Heart right ventricle (tissue), 16 donors: ENCODE measurements at regions of chr13 and their contacts with region 1.

Region 1: DNA sequence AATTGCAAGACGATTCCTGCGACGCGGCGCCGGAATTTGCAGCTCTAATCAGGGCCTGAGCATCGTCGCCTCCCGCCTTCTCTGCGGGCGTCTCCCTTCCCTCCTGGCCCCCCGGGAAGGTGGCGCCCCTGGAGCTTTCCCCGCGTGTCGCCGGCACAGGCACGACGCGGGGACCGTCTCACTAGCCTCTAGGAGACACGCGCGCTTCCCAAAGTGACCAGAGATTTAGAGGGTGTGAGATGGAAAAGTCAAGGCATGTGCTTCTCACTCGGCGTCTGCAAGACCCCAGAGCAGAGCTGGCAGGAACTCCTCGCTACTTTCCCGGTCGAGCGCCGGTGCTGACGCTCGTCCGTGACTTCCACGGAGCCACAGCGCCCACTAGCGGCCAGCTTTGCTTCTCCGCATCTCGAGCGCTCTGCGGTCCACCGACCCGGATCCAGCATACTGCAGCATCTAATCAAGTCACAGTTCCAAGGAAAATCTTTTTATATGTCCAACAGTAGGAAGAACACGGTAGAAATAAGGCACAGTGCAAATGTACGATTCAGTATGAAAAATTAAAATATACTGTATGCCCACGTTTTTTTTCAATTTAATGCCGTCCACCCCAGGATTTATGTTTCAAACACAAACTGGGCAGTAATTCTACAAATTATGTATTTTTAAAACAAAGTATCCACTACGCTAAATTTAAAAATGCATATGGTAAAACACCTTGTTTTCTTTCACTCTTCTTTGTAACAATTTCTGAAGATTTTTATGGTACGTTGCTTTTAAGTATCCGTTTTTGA is 977 bp upstream of the EFNB2 start:
- DNase-seq: peak; percentile 92 to 94
- ATAC-seq: peak; percentile 66 to 92 (median 86)
- H3K4me3 ChIP-seq: peak overlapping the region; percentile 59 to 87 (median 73)
- H3K27ac ChIP-seq: peak overlapping the region; percentile 47 to 88 (median 82)
- H3K4me1 ChIP-seq: peaks cover 0 to 47% (median 21%) of the 10 kb centered on the region in 9 donors
- H3K27me3 ChIP-seq: peaks cover 0 to 39% (median 0%) of the 10 kb centered on the region in 7 donors
- CTCF ChIP-seq: peak; percentile 93 to 99 (median 98)

Region 2: DNA sequence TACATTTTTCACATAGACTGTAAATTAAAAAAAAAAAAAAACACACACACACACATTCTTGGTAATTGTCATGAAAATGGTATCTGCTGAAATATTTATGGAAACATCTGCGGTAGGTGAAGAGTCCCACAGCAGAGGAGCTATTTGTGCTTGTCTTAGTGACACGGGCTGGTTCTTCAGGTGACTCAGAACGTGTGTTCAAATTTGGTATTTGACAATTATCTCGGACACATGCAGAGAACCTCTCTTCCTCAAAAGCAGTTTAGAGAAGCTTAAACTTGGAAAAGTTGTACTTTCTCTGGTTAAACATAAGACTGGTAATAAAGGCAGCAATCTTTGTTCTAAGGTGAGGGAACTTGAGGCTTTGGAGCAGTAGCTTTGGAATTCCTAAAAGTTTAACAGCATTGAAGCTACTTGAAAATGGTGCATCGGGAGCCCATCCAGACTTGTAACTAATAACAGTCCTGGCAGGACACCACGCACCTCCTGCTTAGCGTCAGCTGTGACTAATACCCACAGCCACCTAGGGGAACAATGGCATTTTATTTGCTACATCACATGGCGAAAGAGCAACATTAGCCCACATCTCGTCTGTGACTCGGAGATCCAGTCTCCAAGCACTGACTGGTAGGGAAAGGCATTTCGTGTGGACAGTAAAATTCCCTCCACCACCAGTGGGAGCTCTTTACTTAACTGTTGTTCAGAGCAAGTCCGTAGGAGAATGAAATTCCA is 1965.1 kb before region 1 on chr13:
- intact Hi-C with region 1: loop called in 7 of 10 experiments (anchors 5 to 10 kb)
- DNase-seq: peak in 1 of 2 donors; percentile 78
- ATAC-seq: peak; percentile 58 to 92 (median 83)
- H3K4me3 ChIP-seq: peak overlapping the region in 1 of 10 donors; percentile 8
- H3K27ac ChIP-seq: no peak overlapping the region
- H3K4me1 ChIP-seq: peaks cover 0 to 9% (median 0%) of the 10 kb centered on the region in 9 donors
- H3K27me3 ChIP-seq: peaks cover 0 to 3% (median 0%) of the 10 kb centered on the region in 7 donors
- CTCF ChIP-seq: peak; percentile 8 to 82 (median 65)

Region 3: DNA sequence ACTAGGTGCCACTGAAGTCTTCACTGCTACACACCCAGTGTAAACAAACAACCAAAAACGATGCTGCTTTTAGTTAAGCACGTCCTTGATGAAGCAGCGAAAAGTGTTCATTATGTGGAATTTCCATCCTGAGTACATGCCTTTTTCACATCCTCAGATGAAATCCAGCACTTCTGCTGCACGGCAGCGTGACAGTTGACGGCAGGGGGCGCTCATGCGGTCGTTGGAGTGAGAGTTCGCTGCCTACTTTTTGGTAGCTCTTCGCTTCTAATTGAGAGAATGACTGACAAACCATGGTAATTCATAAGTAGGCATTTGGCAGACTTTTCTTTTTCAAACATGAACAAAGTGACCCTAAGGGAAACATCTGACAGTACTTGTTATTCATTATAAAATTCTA is 1125.8 kb before region 1 on chr13:
- intact Hi-C with region 1: loop called in 1 of 10 experiments (anchors 10 kb)
- DNase-seq: peak; percentile 49 to 62
- ATAC-seq: no peak
- H3K4me3 ChIP-seq: peak overlapping the region in 1 of 10 donors; percentile 36
- H3K27ac ChIP-seq: no peak overlapping the region
- H3K4me1 ChIP-seq: no peaks in the 10 kb centered on the region
- H3K27me3 ChIP-seq: no peaks in the 10 kb centered on the region
- CTCF ChIP-seq: peak; percentile 38 to 70 (median 58)

Region 4: GRCh38 chr13:106373989-106374572 is 162.4 kb before region 1 on chr13:
- intact Hi-C with region 1: no loop called
- DNase-seq: no peak
- ATAC-seq: no peak
- H3K4me3 ChIP-seq: no peak overlapping the region
- H3K27ac ChIP-seq: no peak overlapping the region
- H3K4me1 ChIP-seq: peaks cover 0 to 15% (median 0%) of the 10 kb centered on the region in 9 donors
- H3K27me3 ChIP-seq: no peaks in the 10 kb centered on the region
- CTCF ChIP-seq: no peak

Region 5: DNA sequence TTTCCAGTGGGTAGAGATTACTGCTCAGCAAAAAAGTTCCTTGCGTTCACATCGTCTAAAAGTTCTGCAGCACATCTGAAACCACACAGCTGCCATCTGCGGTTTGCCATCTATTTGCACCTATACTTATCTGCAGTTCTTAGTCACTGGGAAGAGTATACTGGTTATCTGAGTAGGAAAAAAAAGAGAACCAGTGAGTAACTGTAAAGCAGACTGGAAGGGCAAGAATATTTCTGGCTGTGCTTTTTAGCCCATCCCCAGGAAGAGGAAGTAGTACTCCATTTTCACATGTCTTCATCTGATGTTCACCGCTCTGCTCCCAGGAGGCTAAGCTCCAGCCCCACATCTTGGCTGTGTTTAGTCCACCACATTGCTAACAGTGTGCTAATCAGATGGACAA is 36.5 kb before region 1 on chr13:
- intact Hi-C with region 1: loop called in 1 of 10 experiments (anchors 5 kb)
- DNase-seq: no peak
- ATAC-seq: peak in 2 of 8 donors; percentile 31
- H3K4me3 ChIP-seq: no peak overlapping the region
- H3K27ac ChIP-seq: peak overlapping the region in 3 of 10 donors; percentile 4 to 89 (median 86)
- H3K4me1 ChIP-seq: peaks cover 0 to 92% (median 29%) of the 10 kb centered on the region in 9 donors
- H3K27me3 ChIP-seq: peaks cover 0 to 7% (median 0%) of the 10 kb centered on the region in 7 donors
- CTCF ChIP-seq: no peak

Region 6: GRCh38 chr13:106709522-106709921 is 173.1 kb after region 1 on chr13:
- intact Hi-C with region 1: loop called in 1 of 10 experiments (anchors 5 kb)
- DNase-seq: peak in 1 of 2 donors; percentile 54
- ATAC-seq: peak; percentile 70 to 92 (median 88)
- H3K4me3 ChIP-seq: peak overlapping the region in 8 of 10 donors; percentile 19 to 50 (median 40)
- H3K27ac ChIP-seq: peak overlapping the region; percentile 65 to 90 (median 82)
- H3K4me1 ChIP-seq: peaks cover 0 to 67% (median 17%) of the 10 kb centered on the region in 9 donors
- H3K27me3 ChIP-seq: no peaks in the 10 kb centered on the region
- CTCF ChIP-seq: no peak

Region 7: GRCh38 chr13:107006661-107007060 is 470.2 kb after region 1 on chr13:
- intact Hi-C with region 1: no loop called
- DNase-seq: no peak
- ATAC-seq: no peak
- H3K4me3 ChIP-seq: no peak overlapping the region
- H3K27ac ChIP-seq: no peak overlapping the region
- H3K4me1 ChIP-seq: no peaks in the 10 kb centered on the region
- H3K27me3 ChIP-seq: peaks cover 0 to 6% (median 0%) of the 10 kb centered on the region in 7 donors
- CTCF ChIP-seq: no peak